ENCODE measurements at regions of chr18 and their contacts with region 1.

Region 1: DNA sequence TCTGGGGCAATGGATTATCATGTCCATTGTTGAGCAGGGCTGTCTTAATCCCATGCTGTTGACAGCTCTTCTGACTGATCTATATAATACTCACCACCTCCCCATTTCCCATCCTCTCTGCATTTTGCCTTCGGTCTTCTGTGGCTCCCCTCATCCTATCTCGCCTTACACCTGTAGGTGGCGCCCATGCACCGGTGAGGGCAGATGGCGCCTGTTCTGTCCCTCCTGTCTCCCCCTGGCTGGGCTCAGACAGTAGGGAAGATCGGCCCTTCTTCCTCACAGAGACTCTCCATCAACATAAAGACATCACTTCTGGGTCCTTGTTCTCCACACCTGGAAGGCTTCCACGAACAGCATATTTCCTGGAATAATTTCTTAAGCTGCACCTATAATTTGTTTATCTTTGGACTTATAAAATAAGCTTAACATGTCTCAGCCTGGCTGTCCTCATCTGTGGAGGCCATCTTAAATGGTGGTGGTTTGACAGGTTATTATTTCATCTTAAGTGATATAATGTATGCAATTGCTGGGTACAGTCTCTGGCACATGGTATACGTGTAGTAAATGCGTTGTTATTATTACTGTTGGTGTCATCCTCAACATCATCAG is 10.9 kb upstream of the CDH20 start:
- DNase-seq: no peak
- H3K4me3 ChIP-seq: no peak overlapping the region
- H3K27me3 ChIP-seq: no peaks in the 10 kb centered on the region
- CTCF ChIP-seq: peak; percentile 96

Region 2: DNA sequence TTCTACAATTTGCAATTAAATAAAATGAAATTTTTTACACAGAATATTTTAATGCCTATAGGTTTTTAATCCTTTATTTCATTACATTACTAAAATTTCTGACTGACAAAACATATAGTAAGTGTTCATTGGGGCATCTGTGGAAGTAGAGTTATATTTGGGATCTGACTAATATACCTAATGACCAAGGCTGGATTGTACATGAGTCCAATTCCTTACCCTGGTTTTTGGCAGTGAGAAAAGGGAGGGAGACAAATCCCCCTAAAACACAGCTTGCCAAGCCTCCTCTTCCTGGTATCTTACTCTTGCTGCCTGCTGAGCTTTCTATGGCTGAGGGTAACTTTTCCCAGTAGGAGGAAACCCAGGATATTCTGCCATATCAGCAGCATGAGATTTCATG is 138.6 kb before region 1 on chr18:
- CTCF ChIA-PET with region 1: no interaction called
- POLR2A ChIA-PET with region 1: no interaction called
- DNase-seq: no peak
- H3K4me3 ChIP-seq: no peak overlapping the region
- H3K27me3 ChIP-seq: no peaks in the 10 kb centered on the region
- CTCF ChIP-seq: no peak

Region 3: DNA sequence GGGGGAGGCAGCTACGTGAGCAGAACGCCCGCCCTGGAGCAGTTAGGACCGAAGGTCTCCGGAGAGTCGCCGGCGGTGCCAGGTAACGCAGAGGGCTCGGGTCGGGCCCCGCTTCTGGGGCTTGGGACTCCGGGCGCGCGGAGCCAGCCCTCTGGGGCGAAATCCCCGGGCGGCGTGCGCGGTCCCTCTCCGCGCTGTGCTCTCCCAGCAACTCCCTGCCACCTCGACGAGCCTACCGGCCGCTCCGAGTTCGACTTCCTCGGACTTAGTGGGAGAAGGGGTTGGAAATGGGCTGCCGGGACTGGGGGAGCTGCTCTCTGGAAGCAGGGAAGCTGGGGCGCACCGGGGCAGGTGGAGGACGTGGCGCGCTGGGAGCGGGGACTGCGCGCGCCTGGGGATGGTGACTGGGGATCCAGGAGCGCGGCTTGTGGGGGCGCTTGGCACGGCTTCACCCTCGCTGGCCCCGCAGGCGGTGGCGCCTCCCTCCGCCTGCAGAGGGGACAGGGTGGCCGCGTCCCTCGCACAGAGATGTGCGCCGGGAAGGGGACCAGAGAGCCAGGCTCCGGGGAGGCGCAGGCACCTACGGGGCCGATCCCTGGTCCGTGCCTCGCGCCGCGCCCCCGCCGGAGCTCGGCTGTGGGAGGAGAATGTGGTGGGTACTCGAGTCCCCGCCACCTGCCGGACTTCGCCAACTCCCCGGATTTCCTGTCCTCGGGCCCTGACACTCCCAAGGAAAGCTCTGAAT is 11.5 kb after region 1 on chr18:
- CTCF ChIA-PET with region 1: interaction called, 10 read pairs
- POLR2A ChIA-PET with region 1: no interaction called
- DNase-seq: no peak
- H3K4me3 ChIP-seq: peak overlapping the region; percentile 23
- H3K27me3 ChIP-seq: peaks cover 20% of the 10 kb centered on the region
- CTCF ChIP-seq: no peak

Region 4: DNA sequence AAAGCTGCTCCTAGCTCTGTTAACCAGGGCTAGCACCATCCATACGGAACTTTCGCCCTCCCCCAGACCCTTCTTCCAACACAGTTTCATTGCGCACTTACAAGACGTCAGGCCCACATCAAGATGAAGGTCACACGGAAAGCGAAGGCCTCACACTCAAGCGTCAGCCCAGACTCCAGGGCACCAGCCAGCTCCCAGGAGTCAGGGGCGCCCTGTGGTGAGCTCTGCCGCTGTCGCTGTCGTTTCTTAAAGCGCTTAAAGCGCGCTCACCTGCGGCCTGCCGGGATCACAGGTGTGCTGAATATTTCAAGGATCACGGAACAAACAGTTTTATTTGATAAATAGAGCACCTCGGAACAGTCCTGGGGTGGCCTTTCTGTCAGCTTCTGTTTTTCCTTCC is 174.0 kb after region 1 on chr18:
- CTCF ChIA-PET with region 1: interaction called, 282 read pairs
- POLR2A ChIA-PET with region 1: no interaction called
- DNase-seq: no peak
- H3K4me3 ChIP-seq: no peak overlapping the region
- H3K27me3 ChIP-seq: no peaks in the 10 kb centered on the region
- CTCF ChIP-seq: no peak

Region 5: DNA sequence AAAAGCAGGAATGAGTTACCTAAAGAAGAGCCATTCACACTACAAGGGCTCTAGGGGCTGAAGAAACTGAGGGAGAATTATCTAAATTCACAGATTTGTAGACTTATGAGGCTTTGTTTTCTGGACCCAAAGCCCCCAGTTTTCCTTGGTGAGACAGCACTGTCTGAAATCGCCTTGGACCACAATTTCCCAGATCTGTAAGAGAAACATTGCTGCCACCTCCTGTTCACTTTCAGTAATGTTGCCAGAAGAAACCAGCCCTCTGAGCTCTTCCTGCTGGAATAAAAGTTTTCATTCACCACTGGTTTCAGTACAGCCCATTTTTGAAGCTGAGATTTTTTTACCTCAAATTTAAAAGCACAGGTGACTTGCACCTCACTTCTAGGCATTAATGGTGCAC is 180.1 kb after region 1 on chr18:
- CTCF ChIA-PET with region 1: interaction called, 282 read pairs
- POLR2A ChIA-PET with region 1: no interaction called
- DNase-seq: peak; percentile 7
- H3K4me3 ChIP-seq: no peak overlapping the region
- H3K27me3 ChIP-seq: no peaks in the 10 kb centered on the region
- CTCF ChIP-seq: peak; percentile 74

Region 6: GRCh38 chr18:62131301-62131909 is 809.0 kb after region 1 on chr18:
- CTCF ChIA-PET with region 1: interaction called, 27 read pairs
- POLR2A ChIA-PET with region 1: no interaction called
- DNase-seq: peak; percentile 4
- H3K4me3 ChIP-seq: no peak overlapping the region
- H3K27me3 ChIP-seq: no peaks in the 10 kb centered on the region
- CTCF ChIP-seq: peak; percentile 90